ENCODE measurements at regions of chr14 and their contacts with region 1.

Region 1: GRCh38 chr14:22386924-22387775 is 201.9 kb downstream of the DAD1 start:
- DNase-seq: peak in 2 of 3 donors; percentile 38 to 71
- ATAC-seq: peak; percentile 34 to 60
- H3K4me3 ChIP-seq: no peak overlapping the region
- H3K27ac ChIP-seq: no peak overlapping the region
- H3K4me1 ChIP-seq: no peaks in the 10 kb centered on the region
- H3K27me3 ChIP-seq: no peaks in the 10 kb centered on the region

Region 2: DNA sequence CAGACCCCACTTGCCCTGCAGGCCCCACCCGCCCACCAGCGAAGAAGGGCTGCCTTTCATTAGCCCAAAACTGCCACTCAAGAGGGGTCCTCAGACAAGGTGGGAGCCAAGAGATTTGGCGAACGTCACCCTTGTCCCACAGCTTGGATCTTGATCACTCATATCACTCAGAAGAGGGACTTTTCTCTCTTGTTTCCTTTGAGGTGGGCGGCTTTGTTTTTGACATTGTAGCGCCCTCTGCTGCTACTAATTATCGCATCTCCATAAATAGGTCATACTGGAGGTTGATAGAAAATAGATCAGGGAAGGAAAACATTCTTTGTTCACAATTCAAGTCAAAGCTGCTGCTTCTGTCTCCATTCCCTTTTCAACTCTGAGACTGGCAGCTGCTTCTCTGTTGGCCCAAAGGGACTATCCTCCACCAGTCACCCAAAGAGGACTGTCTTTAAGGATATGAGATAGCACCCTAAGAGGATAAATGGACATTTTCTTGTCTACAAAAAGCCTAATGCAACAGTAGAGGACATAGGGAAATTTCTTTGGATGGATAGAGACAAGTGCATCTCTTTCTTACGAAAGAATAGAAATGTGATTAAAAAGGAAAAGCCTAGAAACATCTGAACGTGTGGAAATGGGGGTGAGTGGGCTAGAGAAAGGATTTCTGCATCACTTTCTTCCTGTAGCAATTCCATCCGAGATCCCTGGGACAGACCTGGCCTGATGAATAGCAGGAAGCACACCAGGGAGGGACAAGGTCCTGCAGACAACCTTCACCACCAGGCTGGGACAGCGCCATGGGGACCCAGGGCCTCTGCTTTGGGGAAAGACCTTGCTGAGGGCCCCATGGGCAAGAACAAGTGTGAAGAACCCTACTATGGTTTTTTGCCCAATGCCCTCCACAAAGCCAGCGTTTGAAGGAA is 86.0 kb after region 1 on chr14:
- intact Hi-C with region 1: loop called (anchors 2 to 5 kb)
- DNase-seq: no peak
- ATAC-seq: peak; percentile 5 to 39
- H3K4me3 ChIP-seq: no peak overlapping the region
- H3K27ac ChIP-seq: no peak overlapping the region
- H3K4me1 ChIP-seq: peaks cover 19% of the 10 kb centered on the region
- H3K27me3 ChIP-seq: no peaks in the 10 kb centered on the region

Region 3: DNA sequence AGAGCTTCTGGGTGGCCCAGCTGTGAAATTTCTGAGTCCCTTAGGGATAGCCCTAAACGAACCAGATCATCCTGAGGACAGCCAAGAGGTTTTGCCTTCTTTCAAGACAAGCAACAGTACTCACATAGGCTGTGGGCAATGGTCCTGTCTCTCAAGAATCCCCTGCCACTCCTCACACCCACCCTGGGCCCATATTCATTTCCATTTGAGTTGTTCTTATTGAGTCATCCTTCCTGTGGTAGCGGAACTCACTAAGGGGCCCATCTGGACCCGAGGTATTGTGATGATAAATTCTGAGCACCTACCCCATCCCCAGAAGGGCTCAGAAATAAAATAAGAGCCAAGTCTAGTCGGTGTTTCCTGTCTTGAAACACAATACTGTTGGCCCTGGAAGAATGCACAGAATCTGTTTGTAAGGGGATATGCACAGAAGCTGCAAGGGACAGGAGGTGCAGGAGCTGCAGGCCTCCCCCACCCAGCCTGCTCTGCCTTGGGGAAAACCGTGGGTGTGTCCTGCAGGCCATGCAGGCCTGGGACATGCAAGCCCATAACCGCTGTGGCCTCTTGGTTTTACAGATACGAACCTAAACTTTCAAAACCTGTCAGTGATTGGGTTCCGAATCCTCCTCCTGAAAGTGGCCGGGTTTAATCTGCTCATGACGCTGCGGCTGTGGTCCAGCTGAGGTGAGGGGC is 163.0 kb after region 1 on chr14:
- intact Hi-C with region 1: loop called in 3 of 4 experiments (anchors 5 to 10 kb)
- DNase-seq: no peak
- ATAC-seq: no peak
- H3K4me3 ChIP-seq: no peak overlapping the region
- H3K27ac ChIP-seq: no peak overlapping the region
- H3K4me1 ChIP-seq: peaks cover 11% of the 10 kb centered on the region
- H3K27me3 ChIP-seq: no peaks in the 10 kb centered on the region

Region 4: GRCh38 chr14:22556990-22557623 is 170.0 kb after region 1 on chr14:
- intact Hi-C with region 1: loop called in 2 of 4 experiments (anchors 10 kb)
- DNase-seq: peak; percentile 89 to 95 (median 92)
- ATAC-seq: peak; percentile 85 to 87
- H3K4me3 ChIP-seq: peak overlapping the region; percentile 26
- H3K27ac ChIP-seq: no peak overlapping the region
- H3K4me1 ChIP-seq: peaks cover 2% of the 10 kb centered on the region
- H3K27me3 ChIP-seq: no peaks in the 10 kb centered on the region

Region 5: DNA sequence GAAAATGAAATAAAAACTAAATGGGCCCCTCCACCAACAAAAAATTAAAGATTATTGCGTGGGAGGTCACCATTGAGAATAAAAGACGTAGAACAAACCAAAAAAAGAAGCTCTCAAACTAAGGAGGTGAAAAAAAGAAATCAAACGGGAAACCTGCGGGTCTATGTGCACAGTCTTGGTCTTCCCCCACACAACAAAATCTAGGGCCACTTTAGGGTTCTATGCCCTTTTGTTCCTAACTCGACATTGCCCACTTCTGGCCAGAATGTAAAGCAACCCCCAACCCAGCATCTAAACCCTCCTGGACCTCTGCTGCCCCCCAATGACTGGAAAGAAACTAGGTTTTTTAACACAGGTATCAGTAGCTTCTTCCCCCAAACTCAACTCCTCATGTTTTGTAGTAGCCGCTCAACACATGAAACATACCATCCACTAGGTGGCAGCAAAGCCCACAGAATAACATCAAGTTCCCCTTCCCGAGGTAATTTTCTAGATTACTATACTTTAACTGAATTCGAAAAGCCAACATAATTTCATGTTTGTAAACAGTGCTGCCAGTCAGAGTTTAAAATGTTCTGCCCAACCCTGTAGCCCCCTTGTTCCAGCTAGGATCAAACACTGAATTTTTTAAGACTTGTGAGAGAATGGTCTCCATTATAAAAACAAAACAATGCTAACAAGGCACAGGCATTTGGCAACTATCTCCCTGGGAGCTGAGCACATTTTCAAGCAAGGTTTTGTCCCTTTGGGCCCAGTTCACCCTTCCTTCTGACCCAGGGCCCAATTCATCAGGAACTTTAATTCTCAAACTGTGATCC is 183.2 kb after region 1 on chr14:
- intact Hi-C with region 1: loop called in 1 of 4 experiments (anchors 5 kb)
- DNase-seq: peak in 2 of 3 donors; percentile 50 to 80
- ATAC-seq: peak; percentile 65 to 72
- H3K4me3 ChIP-seq: no peak overlapping the region
- H3K27ac ChIP-seq: peak overlapping the region; percentile 3
- H3K4me1 ChIP-seq: peaks cover 2% of the 10 kb centered on the region
- H3K27me3 ChIP-seq: no peaks in the 10 kb centered on the region

Region 6: DNA sequence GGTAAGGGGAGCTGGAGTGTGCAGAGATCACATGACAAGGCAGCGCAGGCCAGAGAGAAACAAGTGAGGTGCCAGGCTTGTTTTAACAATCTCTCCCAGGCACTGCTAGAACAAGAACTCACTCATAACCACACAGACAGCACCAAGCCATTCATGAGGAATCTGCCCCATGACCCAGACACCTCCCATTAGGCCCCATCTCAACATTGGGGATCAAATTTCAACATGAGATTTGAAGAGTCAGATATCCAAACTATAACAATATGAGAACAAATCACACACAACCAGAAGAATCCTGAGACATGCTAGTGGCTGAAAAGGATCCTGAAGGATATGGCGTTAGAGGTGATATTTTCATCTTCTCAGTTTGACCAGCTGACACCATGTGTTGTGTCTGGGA is 235.1 kb after region 1 on chr14:
- intact Hi-C with region 1: no loop called
- DNase-seq: no peak
- ATAC-seq: no peak
- H3K4me3 ChIP-seq: no peak overlapping the region
- H3K27ac ChIP-seq: no peak overlapping the region
- H3K4me1 ChIP-seq: no peaks in the 10 kb centered on the region
- H3K27me3 ChIP-seq: no peaks in the 10 kb centered on the region

Region 7: DNA sequence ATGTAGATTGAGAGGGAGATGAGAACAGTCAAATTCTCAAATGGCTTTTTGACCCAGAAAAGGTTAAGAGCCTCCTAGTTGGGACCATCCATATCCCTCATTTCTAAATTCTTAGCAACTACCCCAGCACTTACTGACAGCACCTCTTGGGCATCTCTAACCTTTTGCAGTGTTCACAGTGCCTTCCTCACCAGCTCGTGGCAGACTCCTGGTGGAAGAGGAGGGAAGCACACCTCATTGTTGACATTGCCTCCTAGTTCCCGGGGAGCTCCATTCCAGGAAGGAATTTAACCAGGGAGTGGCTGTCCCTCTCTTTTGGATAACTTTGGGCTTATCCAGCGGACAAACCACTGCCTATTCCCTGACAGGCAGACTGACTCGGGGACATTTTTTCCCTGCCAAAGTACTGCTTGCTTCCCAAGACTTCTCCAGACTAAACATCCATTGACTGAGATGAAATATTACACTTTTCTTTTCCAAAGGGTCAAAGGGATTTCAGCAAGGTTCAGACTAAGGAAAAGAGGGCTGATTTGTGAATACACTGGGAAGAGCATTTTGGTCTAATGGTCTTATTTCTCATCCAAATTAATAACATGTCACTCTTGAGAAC is 266.0 kb after region 1 on chr14:
- intact Hi-C with region 1: loop called (anchors 5 to 10 kb)
- DNase-seq: peak in 2 of 3 donors; percentile 41 to 61
- ATAC-seq: peak; percentile 63 to 84
- H3K4me3 ChIP-seq: no peak overlapping the region
- H3K27ac ChIP-seq: no peak overlapping the region
- H3K4me1 ChIP-seq: no peaks in the 10 kb centered on the region
- H3K27me3 ChIP-seq: no peaks in the 10 kb centered on the region

Region 8: GRCh38 chr14:22852940-22853767 is 466.0 kb after region 1 on chr14:
- intact Hi-C with region 1: loop called in 1 of 4 experiments (anchors 10 kb)
- DNase-seq: peak; percentile 85 to 96 (median 96)
- ATAC-seq: peak; percentile 46 to 58
- H3K4me3 ChIP-seq: peak overlapping the region; percentile 46
- H3K27ac ChIP-seq: no peak overlapping the region
- H3K4me1 ChIP-seq: peaks cover 21% of the 10 kb centered on the region
- H3K27me3 ChIP-seq: no peaks in the 10 kb centered on the region

Measured in right cardiac atrium (tissue), 5 donors.